PC-9 (cell line): ENCODE measurements at regions of chr4 and their contacts with region 1.

Region 1: GRCh38 chr4:62771983-62772557 is 1571.9 kb downstream of the ADGRL3 start:
- DNase-seq: no peak
- H3K4me3 ChIP-seq: no peak overlapping the region
- H3K27ac ChIP-seq: no peak overlapping the region
- H3K4me1 ChIP-seq: no peaks in the 10 kb centered on the region
- H3K27me3 ChIP-seq: no peaks in the 10 kb centered on the region
- CTCF ChIP-seq: no peak

Region 2: DNA sequence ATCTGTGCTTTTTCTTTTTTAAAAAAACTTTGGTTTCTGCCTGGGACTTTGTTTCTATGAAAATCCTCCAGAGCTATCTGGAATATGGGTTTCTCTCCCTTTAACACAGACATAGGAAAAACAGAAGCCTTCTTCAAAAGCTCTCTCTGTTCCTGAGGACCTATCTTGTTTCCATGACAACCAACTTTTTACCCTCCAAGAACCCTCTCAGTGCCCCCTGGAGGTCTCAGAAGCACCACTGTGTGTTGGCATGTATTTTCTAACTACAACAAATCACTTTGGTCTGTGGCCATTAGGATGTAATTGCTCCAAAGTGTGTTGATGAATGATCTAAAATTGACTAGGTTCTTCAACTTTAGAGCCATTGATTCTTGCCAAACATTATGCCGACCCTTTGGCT is 240.3 kb before region 1 on chr4:
- CTCF ChIA-PET with region 1: no interaction called
- POLR2A ChIA-PET with region 1: no interaction called
- intact Hi-C with region 1: no loop called
- DNase-seq: no peak
- H3K4me3 ChIP-seq: no peak overlapping the region
- H3K27ac ChIP-seq: no peak overlapping the region
- H3K4me1 ChIP-seq: no peaks in the 10 kb centered on the region
- H3K27me3 ChIP-seq: no peaks in the 10 kb centered on the region
- CTCF ChIP-seq: no peak

Region 3: DNA sequence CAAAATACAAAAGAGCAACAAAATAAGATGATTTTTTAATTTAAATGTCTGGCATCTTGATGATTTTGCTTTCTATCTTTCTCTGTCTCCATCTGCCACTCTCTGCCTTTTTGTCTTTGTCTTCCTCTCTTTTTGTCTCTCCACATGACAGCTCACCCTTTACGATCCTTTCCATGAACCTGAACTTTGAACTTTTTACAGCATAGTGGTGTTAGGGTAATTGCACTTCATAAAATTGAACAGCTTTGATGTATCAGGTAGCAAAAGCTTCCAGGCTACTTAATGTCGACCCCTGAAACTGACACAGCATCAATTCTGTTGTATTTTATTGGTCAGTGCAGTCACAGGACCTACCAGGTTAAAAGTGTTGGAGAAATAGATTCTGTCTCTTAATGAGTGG is 54.9 kb before region 1 on chr4:
- CTCF ChIA-PET with region 1: no interaction called
- POLR2A ChIA-PET with region 1: no interaction called
- intact Hi-C with region 1: no loop called
- DNase-seq: no peak
- H3K4me3 ChIP-seq: no peak overlapping the region
- H3K27ac ChIP-seq: no peak overlapping the region
- H3K4me1 ChIP-seq: no peaks in the 10 kb centered on the region
- H3K27me3 ChIP-seq: no peaks in the 10 kb centered on the region
- CTCF ChIP-seq: no peak

Region 4: DNA sequence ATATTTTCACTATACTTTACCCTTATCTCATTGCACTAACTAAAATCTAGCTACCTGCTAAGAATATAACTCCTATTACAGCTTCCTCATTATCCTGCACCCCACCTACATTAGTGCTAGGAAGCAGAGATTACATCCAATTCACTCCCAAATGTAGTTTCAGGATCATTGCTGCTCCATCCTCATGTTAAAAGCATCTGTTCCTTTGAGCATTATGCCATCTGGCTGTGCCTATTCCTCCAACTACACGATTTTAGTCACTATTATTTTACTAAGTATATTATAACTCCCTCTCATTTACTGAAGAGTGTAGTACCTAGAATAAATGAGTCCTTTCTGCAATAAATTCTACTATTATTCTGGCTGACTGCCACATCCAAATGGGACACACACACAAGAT is 50.2 kb after region 1 on chr4:
- CTCF ChIA-PET with region 1: no interaction called
- POLR2A ChIA-PET with region 1: no interaction called
- intact Hi-C with region 1: no loop called
- DNase-seq: no peak
- H3K4me3 ChIP-seq: no peak overlapping the region
- H3K27ac ChIP-seq: no peak overlapping the region
- H3K4me1 ChIP-seq: no peaks in the 10 kb centered on the region
- H3K27me3 ChIP-seq: no peaks in the 10 kb centered on the region
- CTCF ChIP-seq: no peak

Region 5: DNA sequence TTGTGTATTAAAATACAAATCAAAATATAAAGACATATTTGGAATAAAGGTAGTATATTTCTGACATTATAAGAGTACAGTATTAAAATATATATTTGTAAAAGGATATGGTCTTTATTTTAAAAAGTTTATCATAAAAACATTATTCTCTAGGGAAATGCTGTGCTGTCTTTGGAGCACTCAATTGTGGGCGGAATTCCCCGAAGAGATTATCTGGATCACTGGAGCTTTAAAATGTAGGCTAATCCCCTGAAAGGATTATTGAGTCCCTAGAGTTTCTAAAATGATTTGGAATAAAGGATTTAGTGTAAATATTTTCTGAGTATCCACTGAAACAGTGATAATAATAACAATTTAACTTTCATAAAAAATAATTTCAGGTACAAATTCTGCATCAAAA is 397.8 kb after region 1 on chr4:
- CTCF ChIA-PET with region 1: interaction called, 11 read pairs
- POLR2A ChIA-PET with region 1: no interaction called
- intact Hi-C with region 1: no loop called
- DNase-seq: no peak
- H3K4me3 ChIP-seq: no peak overlapping the region
- H3K27ac ChIP-seq: no peak overlapping the region
- H3K4me1 ChIP-seq: no peaks in the 10 kb centered on the region
- H3K27me3 ChIP-seq: no peaks in the 10 kb centered on the region
- CTCF ChIP-seq: no peak